Mammary epithelial cell (primary cell): ENCODE measurements at regions of chr1 and their contacts with region 1.

Region 1: DNA sequence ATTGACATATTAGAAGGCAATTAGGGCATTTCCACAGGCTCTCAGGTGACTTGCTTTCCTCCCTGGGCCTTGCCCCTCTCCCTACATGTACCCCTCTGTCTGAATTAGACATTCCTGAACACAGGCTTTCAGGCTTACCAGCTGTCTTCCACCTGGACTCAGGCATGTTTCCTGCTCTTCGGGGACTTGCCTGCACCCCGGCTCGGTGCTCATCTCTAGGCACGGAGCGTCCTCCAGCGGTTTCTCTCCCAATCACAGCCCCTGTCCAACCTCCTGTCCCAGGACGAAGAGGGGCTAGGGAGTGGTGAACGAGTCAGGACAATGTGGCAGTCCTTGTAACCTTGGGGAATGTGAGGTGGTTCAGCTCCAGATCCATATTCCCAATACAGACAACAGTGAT is 4.2 kb downstream of the PROK1 start:
- DNase-seq: no peak
- H3K4me3 ChIP-seq: no peak overlapping the region
- H3K27ac ChIP-seq: no peak overlapping the region
- H3K4me1 ChIP-seq: no peaks in the 10 kb centered on the region
- H3K27me3 ChIP-seq: peaks cover 3% of the 10 kb centered on the region
- CTCF ChIP-seq: no peak

Region 2: DNA sequence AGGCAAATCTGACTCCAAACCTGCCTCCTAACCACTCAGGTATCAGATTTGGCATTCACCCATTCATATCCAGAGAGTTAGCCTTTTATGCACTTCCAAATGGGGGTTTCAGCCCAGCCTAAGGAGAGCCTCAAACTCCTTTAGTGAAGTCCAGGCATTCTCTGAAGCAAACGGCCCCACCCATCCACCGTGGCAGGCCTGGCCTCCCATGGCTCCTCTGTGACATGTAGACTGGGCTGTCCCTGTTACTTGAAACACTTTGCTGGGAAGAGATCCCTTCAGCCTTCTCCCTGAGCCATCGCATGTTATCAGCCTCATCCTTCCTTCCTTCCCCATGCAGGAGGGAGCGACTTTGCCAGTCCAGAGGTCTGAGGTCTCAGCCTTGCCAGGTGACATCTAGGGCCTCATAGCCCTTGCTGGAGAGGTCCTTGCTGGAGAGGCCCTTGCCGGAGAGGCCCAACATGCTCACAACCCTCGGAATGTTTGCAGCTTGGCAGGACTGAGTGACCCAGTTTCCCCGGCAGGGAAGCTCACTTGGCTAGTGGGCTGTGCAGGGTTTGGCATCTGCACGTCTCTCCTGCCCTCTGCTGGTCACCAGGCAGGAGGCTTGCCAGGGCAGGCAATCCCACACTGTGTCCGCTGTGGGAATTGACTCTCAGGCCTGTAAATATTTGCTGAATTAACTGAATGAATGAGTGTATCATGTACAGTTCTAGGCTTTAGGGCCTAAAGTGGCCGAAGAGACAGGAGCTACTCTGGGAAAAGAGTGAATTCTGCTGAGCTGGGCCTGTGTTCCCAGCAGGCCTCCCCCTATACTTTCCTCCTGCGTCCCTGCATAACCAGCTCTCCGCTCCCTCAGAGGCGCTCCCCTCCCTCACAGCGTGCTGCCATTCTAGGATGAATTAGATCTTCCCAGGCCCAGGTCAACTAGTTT is 142.7 kb before region 1 on chr1:
- CTCF ChIA-PET with region 1: no interaction called
- dilution Hi-C with region 1: no loop called
- in situ Hi-C with region 1: loop called in 1 of 2 experiments (anchors 10 kb)
- intact Hi-C with region 1: loop called (anchors 1 kb)
- DNase-seq: peak; percentile 49
- H3K4me3 ChIP-seq: no peak overlapping the region
- H3K27ac ChIP-seq: no peak overlapping the region
- H3K4me1 ChIP-seq: peaks cover 20% of the 10 kb centered on the region
- H3K27me3 ChIP-seq: no peaks in the 10 kb centered on the region
- CTCF ChIP-seq: peak; percentile 97 to 99

Region 3: GRCh38 chr1:110393691-110394564 is 61.2 kb before region 1 on chr1:
- CTCF ChIA-PET with region 1: no interaction called
- dilution Hi-C with region 1: no loop called
- in situ Hi-C with region 1: no loop called
- intact Hi-C with region 1: no loop called
- DNase-seq: peak; percentile 79
- H3K4me3 ChIP-seq: no peak overlapping the region
- H3K27ac ChIP-seq: no peak overlapping the region
- H3K4me1 ChIP-seq: peaks cover 28% of the 10 kb centered on the region
- H3K27me3 ChIP-seq: no peaks in the 10 kb centered on the region
- CTCF ChIP-seq: no peak